Vagina (tissue), 2 donors: ENCODE measurements at regions of chr4 and their contacts with region 1.

Region 1: DNA sequence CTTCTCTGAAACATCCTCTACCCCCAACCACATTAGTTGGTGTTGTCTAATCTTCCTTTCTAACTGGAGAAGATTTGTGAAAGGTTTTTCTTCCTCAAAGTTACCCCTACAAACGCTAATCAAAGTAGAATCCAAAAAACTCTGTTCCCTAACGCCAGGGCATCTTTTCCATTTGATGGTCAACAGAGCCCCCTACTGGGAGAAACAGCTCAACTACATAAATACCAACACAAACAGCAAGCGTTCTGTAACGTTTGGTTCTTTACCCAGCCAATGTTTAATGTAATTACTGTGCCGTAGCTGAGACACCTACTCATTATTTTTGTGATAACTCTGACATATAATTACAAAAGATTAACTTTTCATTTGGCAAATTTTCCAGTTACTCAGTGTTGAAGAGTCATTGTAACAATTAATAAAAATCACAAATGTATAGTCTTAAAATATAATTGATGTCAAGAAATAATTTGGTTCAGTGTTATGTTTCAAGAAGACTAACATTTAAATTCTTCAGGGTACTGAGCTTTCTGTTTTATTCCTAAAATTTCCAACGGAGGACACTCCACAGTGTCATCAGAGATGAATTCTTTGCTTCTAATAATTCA is 94.9 kb upstream of the TBC1D9 start:
- DNase-seq: no peak
- H3K4me3 ChIP-seq: no peak overlapping the region
- H3K27ac ChIP-seq: no peak overlapping the region
- H3K4me1 ChIP-seq: peaks cover 3% of the 10 kb centered on the region
- H3K27me3 ChIP-seq: no peaks in the 10 kb centered on the region
- CTCF ChIP-seq: peak; percentile 72 to 87 (median 83)
- POLR2A ChIP-seq: no peak

Region 2: GRCh38 chr4:140359562-140360427 is 491.3 kb before region 1 on chr4:
- intact Hi-C with region 1: loop called (anchors 10 kb)
- DNase-seq: no peak
- H3K4me3 ChIP-seq: no peak overlapping the region
- H3K27ac ChIP-seq: no peak overlapping the region
- H3K4me1 ChIP-seq: no peaks in the 10 kb centered on the region
- H3K27me3 ChIP-seq: no peaks in the 10 kb centered on the region
- CTCF ChIP-seq: peak; percentile 52 to 70 (median 59)
- POLR2A ChIP-seq: no peak

Region 3: GRCh38 chr4:140637836-140638235 is 213.3 kb before region 1 on chr4:
- intact Hi-C with region 1: no loop called
- DNase-seq: no peak
- H3K4me3 ChIP-seq: no peak overlapping the region
- H3K27ac ChIP-seq: no peak overlapping the region
- H3K4me1 ChIP-seq: peaks cover 7% of the 10 kb centered on the region
- H3K27me3 ChIP-seq: no peaks in the 10 kb centered on the region
- CTCF ChIP-seq: peak in 1 of 3 experiments; percentile 16
- POLR2A ChIP-seq: no peak